ENCODE measurements at regions of chr5 and their contacts with region 1.

Region 1: DNA sequence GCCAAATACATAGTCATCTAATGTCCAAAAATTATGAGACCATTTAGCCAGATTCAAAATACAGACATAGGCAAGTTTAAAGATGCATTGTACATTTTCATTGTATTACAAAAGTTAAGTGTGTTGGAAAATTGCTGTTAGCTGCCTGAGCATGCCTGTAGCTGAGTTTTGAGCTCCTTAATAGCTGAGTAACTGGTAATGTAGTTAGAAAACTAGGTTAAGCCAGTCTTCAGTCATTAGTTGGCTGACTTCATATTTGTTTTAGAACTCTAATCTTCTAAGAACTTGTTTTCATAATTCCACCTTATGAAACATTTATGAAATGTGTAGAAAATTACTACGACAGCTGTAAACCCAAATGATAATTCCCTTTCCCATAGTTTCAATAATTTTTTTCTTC is 293.4 kb downstream of the ARRDC3 start:
- DNase-seq: no peak
- H3K4me3 ChIP-seq: no peak overlapping the region
- H3K27ac ChIP-seq: no peak overlapping the region
- H3K27me3 ChIP-seq: no peaks in the 10 kb centered on the region
- CTCF ChIP-seq: no peak

Region 2: GRCh38 chr5:90226433-90227099 is 863.2 kb before region 1 on chr5:
- intact Hi-C with region 1: no loop called
- DNase-seq: peak in 1 of 10 donors; percentile 27
- H3K4me3 ChIP-seq: no peak overlapping the region
- H3K27ac ChIP-seq: no peak overlapping the region
- H3K27me3 ChIP-seq: no peaks in the 10 kb centered on the region
- CTCF ChIP-seq: no peak

Region 3: GRCh38 chr5:91016954-91017700 is 72.6 kb before region 1 on chr5:
- intact Hi-C with region 1: loop called in 1 of 2 experiments (anchors 10 kb)
- DNase-seq: no peak
- H3K4me3 ChIP-seq: no peak overlapping the region
- H3K27ac ChIP-seq: peak overlapping the region in 1 of 59 donors; percentile 3
- H3K27me3 ChIP-seq: no peaks in the 10 kb centered on the region
- CTCF ChIP-seq: no peak